GM12878 (cell line): ENCODE measurements at regions of chr15 and their contacts with region 1.

Region 1: DNA sequence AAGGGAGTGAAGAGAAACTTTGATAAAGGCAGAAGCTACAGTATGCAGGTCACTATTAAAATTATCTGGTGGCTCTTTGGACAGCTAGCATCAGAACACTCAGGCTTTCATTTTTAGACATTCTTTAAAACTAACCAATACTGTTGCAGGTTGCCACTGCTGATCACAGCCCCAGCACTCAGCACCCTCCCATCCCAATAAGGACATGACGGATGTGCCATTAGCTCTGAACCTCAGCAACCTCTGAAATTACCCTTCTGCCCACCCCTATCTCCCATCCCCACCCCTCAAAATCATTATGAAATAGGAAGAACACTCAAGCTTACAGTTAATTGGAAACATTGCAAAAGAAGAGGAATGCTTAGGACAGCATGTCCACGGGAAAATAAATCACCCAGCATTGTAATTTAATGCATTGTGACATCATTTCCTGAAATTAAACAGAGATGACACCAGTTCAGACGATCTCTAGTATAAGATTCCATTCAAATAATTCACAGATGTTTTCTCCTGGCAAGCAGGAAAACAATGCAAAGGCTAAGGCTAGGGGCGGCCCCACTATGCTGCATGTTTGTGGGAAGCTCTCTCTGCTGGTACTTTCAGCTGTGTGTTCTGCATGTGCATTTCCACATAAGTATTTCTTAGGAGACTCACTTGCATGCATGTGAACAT is 71.6 kb downstream of the MEIS2 start:
- DNase-seq: no peak
- ATAC-seq: peak; percentile 60
- H3K4me3 ChIP-seq: no peak overlapping the region
- H3K27ac ChIP-seq: no peak overlapping the region
- H3K4me1 ChIP-seq: 0 out of 2 replicates have a peak, but pooled peaks cover 4% of the 10 kb centered on the region
- H3K27me3 ChIP-seq: no peaks in the 10 kb centered on the region
- CTCF ChIP-seq: no peak
- EP300 ChIP-seq: no peak
- POLR2A ChIP-seq: no peak
- RAD21 ChIP-seq: no peak

Region 2: GRCh38 chr15:37015035-37015434 is 13.7 kb before region 1 on chr15:
- CTCF ChIA-PET with region 1: interaction called, 10 read pairs
- POLR2A ChIA-PET with region 1: interaction called, 11 read pairs
- RAD21 ChIA-PET with region 1: interaction called, 8 read pairs
- SMC1A ChIA-PET with region 1: interaction called, 15 read pairs
- in situ Hi-C with region 1: no loop called
- intact Hi-C with region 1: no loop called
- DNase-seq: no peak
- ATAC-seq: peak; percentile 84
- H3K4me3 ChIP-seq: no peak overlapping the region
- H3K27ac ChIP-seq: no peak overlapping the region
- H3K4me1 ChIP-seq: peaks cover 17% of the 10 kb centered on the region
- H3K27me3 ChIP-seq: no peaks in the 10 kb centered on the region
- CTCF ChIP-seq: no peak
- EP300 ChIP-seq: peak; percentile 63 to 71; a peak in 2 of 4 replicates
- POLR2A ChIP-seq: no peak
- RAD21 ChIP-seq: no peak

Region 3: DNA sequence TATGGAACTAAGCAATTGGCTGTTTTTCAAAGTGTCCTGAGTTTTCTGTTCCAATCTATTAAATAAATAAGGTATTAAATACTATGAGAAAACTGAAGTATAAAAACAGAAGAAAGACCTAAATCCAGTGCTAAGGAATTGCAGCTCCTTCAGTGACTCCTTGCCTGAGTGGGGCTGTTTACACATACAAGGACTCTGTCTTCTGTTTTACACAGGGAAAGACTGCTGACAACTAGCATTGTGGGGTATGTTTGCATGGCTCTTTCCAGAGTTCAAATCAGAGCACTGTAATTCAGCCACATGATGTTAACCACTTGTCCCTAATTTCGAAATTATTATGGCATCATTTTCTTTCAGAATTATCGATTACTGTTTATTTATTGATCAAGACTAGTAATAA is 102.9 kb after region 1 on chr15:
- CTCF ChIA-PET with region 1: no interaction called
- POLR2A ChIA-PET with region 1: no interaction called
- RAD21 ChIA-PET with region 1: no interaction called
- SMC1A ChIA-PET with region 1: no interaction called
- in situ Hi-C with region 1: no loop called
- intact Hi-C with region 1: no loop called
- DNase-seq: no peak
- ATAC-seq: no peak
- H3K4me3 ChIP-seq: no peak overlapping the region
- H3K27ac ChIP-seq: no peak overlapping the region
- H3K4me1 ChIP-seq: peaks cover 4% of the 10 kb centered on the region; the same call in 1 of the 2 replicates
- H3K27me3 ChIP-seq: peaks cover 0 to 2% of the 10 kb centered on the region in 2 experiments; a peak in 2 of 4 replicates
- CTCF ChIP-seq: no peak
- EP300 ChIP-seq: no peak
- POLR2A ChIP-seq: no peak
- RAD21 ChIP-seq: no peak